ENCODE measurements at regions of chr13 and their contacts with region 1.

Region 1: DNA sequence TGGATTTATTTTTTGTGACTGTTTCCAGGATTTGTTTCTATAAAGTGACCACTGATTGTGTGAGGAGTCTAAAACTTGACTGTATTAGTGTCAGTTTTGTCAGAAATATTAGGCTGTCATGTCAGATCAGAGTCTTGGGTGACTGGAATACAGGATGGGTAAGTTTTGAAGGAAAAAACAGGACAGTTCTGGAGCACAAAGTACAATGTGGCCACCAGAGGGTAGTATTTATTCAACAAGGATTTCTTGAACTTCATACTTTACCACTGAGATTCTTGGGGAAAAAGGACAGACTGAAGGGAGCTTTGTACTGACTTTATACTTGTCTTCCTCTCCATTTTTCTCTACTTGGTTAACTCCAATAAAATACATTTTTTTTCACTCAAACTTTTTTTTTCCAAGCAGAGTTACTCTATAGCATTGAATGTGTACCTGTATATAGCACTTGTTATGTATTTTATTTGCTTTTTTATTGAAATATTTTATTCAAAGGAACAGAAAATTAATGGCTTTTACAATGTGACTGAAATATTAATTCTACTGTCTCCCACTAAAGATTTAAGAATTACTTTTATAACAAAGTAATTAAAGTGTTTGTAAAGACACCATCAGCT is 51.1 kb downstream of the LMO7 start:
- DNase-seq: peak; percentile 53
- H3K4me3 ChIP-seq: no peak overlapping the region
- H3K27ac ChIP-seq: no peak overlapping the region
- H3K4me1 ChIP-seq: peaks cover 24% of the 10 kb centered on the region
- H3K27me3 ChIP-seq: no peaks in the 10 kb centered on the region
- CTCF ChIP-seq: peak; percentile 59

Region 2: DNA sequence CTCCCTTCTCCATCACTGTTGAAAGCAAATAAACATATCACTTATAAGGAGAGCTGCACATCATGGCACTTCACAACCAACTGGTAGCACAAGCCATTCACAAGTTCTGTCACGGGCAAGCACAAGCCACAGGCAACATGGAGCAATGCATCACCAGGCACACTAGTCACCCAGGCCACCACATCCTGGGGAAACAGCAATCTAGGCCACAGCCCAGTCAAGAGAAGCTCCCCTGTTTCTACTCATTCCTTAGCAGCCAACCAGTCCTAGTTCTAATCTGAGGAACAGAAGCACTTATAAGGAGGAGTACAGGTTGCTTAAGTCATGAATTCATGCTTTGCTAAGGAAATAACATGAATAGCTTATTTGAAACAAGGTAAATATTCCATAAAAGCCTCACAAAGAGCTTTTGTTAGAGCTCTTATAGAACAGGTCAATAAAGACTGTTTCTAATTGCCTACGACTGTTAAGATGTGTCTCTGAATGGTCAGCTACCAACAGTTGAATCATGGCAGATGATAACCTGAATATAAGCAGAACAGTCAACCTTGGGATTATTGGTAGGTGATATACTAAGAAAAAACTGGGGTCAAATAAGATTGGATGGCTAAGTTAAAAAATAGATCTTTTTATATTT is 374.3 kb before region 1 on chr13:
- CTCF ChIA-PET with region 1: no interaction called
- dilution Hi-C with region 1: no loop called
- in situ Hi-C with region 1: no loop called
- intact Hi-C with region 1: no loop called
- DNase-seq: no peak
- H3K4me3 ChIP-seq: no peak overlapping the region
- H3K27ac ChIP-seq: no peak overlapping the region
- H3K4me1 ChIP-seq: no peaks in the 10 kb centered on the region
- H3K27me3 ChIP-seq: no peaks in the 10 kb centered on the region
- CTCF ChIP-seq: no peak

Region 3: GRCh38 chr13:75555836-75556235 is 131.4 kb before region 1 on chr13:
- CTCF ChIA-PET with region 1: no interaction called
- dilution Hi-C with region 1: no loop called
- in situ Hi-C with region 1: no loop called
- intact Hi-C with region 1: no loop called
- DNase-seq: no peak
- H3K4me3 ChIP-seq: no peak overlapping the region
- H3K27ac ChIP-seq: no peak overlapping the region
- H3K4me1 ChIP-seq: no peaks in the 10 kb centered on the region
- H3K27me3 ChIP-seq: no peaks in the 10 kb centered on the region
- CTCF ChIP-seq: no peak

Region 4: GRCh38 chr13:75566658-75567057 is 120.6 kb before region 1 on chr13:
- CTCF ChIA-PET with region 1: no interaction called
- dilution Hi-C with region 1: no loop called
- in situ Hi-C with region 1: no loop called
- intact Hi-C with region 1: loop called (anchors 5 kb)
- DNase-seq: peak; percentile 35
- H3K4me3 ChIP-seq: no peak overlapping the region
- H3K27ac ChIP-seq: no peak overlapping the region
- H3K4me1 ChIP-seq: peaks cover 17% of the 10 kb centered on the region
- H3K27me3 ChIP-seq: no peaks in the 10 kb centered on the region
- CTCF ChIP-seq: peak; percentile 25 to 44

Region 5: GRCh38 chr13:75715601-75716523 is 28.6 kb after region 1 on chr13:
- CTCF ChIA-PET with region 1: interaction called, 18 read pairs
- dilution Hi-C with region 1: no loop called
- in situ Hi-C with region 1: no loop called
- intact Hi-C with region 1: no loop called
- DNase-seq: peak; percentile 53
- H3K4me3 ChIP-seq: no peak overlapping the region
- H3K27ac ChIP-seq: peak overlapping the region; percentile 94
- H3K4me1 ChIP-seq: peaks cover 10% of the 10 kb centered on the region
- H3K27me3 ChIP-seq: no peaks in the 10 kb centered on the region
- CTCF ChIP-seq: no peak

Region 6: GRCh38 chr13:75870397-75870903 is 183.2 kb after region 1 on chr13:
- CTCF ChIA-PET with region 1: interaction called, 3 read pairs
- dilution Hi-C with region 1: loop called (anchors 10 kb)
- in situ Hi-C with region 1: loop called (anchors 10 kb)
- intact Hi-C with region 1: loop called (anchors 2 kb)
- DNase-seq: no peak
- H3K4me3 ChIP-seq: peak overlapping the region; percentile 44 to 56 (median 55)
- H3K27ac ChIP-seq: peak overlapping the region; percentile 3
- H3K4me1 ChIP-seq: peaks cover 5% of the 10 kb centered on the region
- H3K27me3 ChIP-seq: peaks cover 1% of the 10 kb centered on the region
- CTCF ChIP-seq: peak; percentile 76 to 77

Region 7: DNA sequence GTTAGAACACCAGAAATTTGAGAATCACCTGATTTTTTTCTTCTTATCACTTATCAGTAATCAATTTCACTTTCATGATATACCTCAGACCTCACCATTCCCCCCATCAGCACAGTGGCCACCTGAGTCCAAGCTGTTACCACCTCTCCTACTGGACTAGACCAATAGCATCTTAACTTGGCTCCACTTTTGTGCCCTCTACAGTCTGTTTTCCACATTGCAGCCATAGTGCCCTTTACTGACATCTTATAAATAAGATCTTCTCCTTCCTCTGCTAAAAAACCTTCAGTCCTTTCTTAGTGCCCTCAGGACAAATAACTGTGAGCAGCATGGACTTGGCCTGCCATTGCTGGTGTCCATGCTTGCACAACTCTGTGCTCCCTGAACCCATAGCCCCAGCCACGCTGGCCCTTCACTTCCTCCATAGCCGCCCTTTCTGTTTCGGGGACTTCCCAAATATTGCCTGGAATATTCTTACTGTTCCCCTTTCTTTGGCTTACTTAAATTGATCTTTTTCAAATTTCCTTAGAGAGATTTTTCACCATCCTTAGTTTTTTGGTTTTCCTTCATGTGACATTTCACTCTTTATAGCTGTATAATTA is 329.6 kb after region 1 on chr13:
- CTCF ChIA-PET with region 1: no interaction called
- dilution Hi-C with region 1: no loop called
- in situ Hi-C with region 1: loop called (anchors 25 kb)
- intact Hi-C with region 1: loop called (anchors 5 kb)
- DNase-seq: peak; percentile 40
- H3K4me3 ChIP-seq: no peak overlapping the region
- H3K27ac ChIP-seq: no peak overlapping the region
- H3K4me1 ChIP-seq: peaks cover 26% of the 10 kb centered on the region
- H3K27me3 ChIP-seq: no peaks in the 10 kb centered on the region
- CTCF ChIP-seq: peak; percentile 68

Region 8: GRCh38 chr13:76903544-76904162 is 1216.4 kb after region 1 on chr13:
- CTCF ChIA-PET with region 1: interaction called, 4 read pairs
- dilution Hi-C with region 1: no loop called
- in situ Hi-C with region 1: no loop called
- intact Hi-C with region 1: loop called (anchors 5 kb)
- DNase-seq: peak; percentile 64
- H3K4me3 ChIP-seq: no peak overlapping the region
- H3K27ac ChIP-seq: no peak overlapping the region
- H3K4me1 ChIP-seq: no peaks in the 10 kb centered on the region
- H3K27me3 ChIP-seq: peaks cover 1% of the 10 kb centered on the region
- CTCF ChIP-seq: peak; percentile 99 to 100